Heart left ventricle (tissue), 16 donors: ENCODE measurements at regions of chr3 and their contacts with region 1.

Region 1: GRCh38 chr3:43540624-43541023 is 81.2 kb downstream of the ANO10 start:
- DNase-seq: no peak
- ATAC-seq: no peak
- H3K4me3 ChIP-seq: no peak overlapping the region
- H3K27ac ChIP-seq: no peak overlapping the region
- H3K4me1 ChIP-seq: no peaks in the 10 kb centered on the region
- H3K27me3 ChIP-seq: no peaks in the 10 kb centered on the region
- CTCF ChIP-seq: no peak
- POLR2A ChIP-seq: no peak

Region 2: GRCh38 chr3:43423142-43423541 is 117.5 kb before region 1 on chr3:
- intact Hi-C with region 1: no loop called
- DNase-seq: peak in 4 of 5 donors; percentile 32 to 51 (median 46)
- ATAC-seq: peak; percentile 11 to 58 (median 32)
- H3K4me3 ChIP-seq: no peak overlapping the region
- H3K27ac ChIP-seq: peak overlapping the region; percentile 12 to 95 (median 79)
- H3K4me1 ChIP-seq: peaks cover 0 to 55% (median 16%) of the 10 kb centered on the region in 12 donors
- H3K27me3 ChIP-seq: no peaks in the 10 kb centered on the region
- CTCF ChIP-seq: no peak
- POLR2A ChIP-seq: no peak

Region 3: GRCh38 chr3:43690400-43691119 is 149.9 kb after region 1 on chr3 and contains the start of gene ABHD5:
- intact Hi-C with region 1: loop called in 2 of 10 experiments (anchors 5 to 10 kb)
- DNase-seq: peak; percentile 89 to 96 (median 93)
- ATAC-seq: peak; percentile 95 to 98 (median 97)
- H3K4me3 ChIP-seq: peak within 1 kb of the TSS; percentile 73 to 98 (median 86)
- H3K27ac ChIP-seq: peak within 1 kb of the TSS; percentile 83 to 97 (median 94)
- H3K4me1 ChIP-seq: peaks cover 2 to 38% (median 14%) of the 10 kb centered on the region in 12 donors
- H3K27me3 ChIP-seq: no peaks in the 10 kb centered on the region
- CTCF ChIP-seq: peak in 5 of 12 donors; percentile 2 to 47 (median 30)
- POLR2A ChIP-seq: peak; percentile 81 to 99
- total RNA-seq, gene ABHD5: 24.2 to 48.2 (median 26.7) TPM

Region 4: GRCh38 chr3:43769471-43770425 is 229.1 kb after region 1 on chr3:
- intact Hi-C with region 1: loop called in 2 of 10 experiments (anchors 10 kb)
- DNase-seq: peak; percentile 94 to 98 (median 97)
- ATAC-seq: peak; percentile 86 to 94 (median 92)
- H3K4me3 ChIP-seq: peak overlapping the region in 10 of 12 donors; percentile 10 to 55 (median 46)
- H3K27ac ChIP-seq: peak overlapping the region; percentile 31 to 90 (median 86)
- H3K4me1 ChIP-seq: peaks cover 0 to 55% (median 30%) of the 10 kb centered on the region in 12 donors
- H3K27me3 ChIP-seq: no peaks in the 10 kb centered on the region
- CTCF ChIP-seq: peak; percentile 90 to 99 (median 95)
- POLR2A ChIP-seq: peak in 1 of 2 donors; percentile 20

Region 5: GRCh38 chr3:44114142-44114541 is 573.5 kb after region 1 on chr3:
- intact Hi-C with region 1: loop called in 2 of 10 experiments (anchors 10 kb)
- DNase-seq: peak in 4 of 5 donors; percentile 25 to 68 (median 42)
- ATAC-seq: peak in 3 of 4 donors; percentile 42 to 55 (median 42)
- H3K4me3 ChIP-seq: no peak overlapping the region
- H3K27ac ChIP-seq: no peak overlapping the region
- H3K4me1 ChIP-seq: no peaks in the 10 kb centered on the region
- H3K27me3 ChIP-seq: peaks cover 0 to 27% (median 0%) of the 10 kb centered on the region in 9 donors
- CTCF ChIP-seq: peak; percentile 8 to 47 (median 38)
- POLR2A ChIP-seq: no peak

Region 6: GRCh38 chr3:44208086-44208485 is 667.5 kb after region 1 on chr3:
- intact Hi-C with region 1: loop called in 1 of 10 experiments (anchors 10 kb)
- DNase-seq: no peak
- ATAC-seq: no peak
- H3K4me3 ChIP-seq: no peak overlapping the region
- H3K27ac ChIP-seq: no peak overlapping the region
- H3K4me1 ChIP-seq: no peaks in the 10 kb centered on the region
- H3K27me3 ChIP-seq: peaks cover 0 to 10% (median 0%) of the 10 kb centered on the region in 9 donors
- CTCF ChIP-seq: no peak
- POLR2A ChIP-seq: no peak